CD8-positive, alpha-beta T cell (primary cell): ENCODE measurements at regions of chr11 and their contacts with region 1.

Region 1: GRCh38 chr11:11798586-11799438 is 43.0 kb upstream of the USP47 start:
- DNase-seq: peak; percentile 44 to 90 (median 77)
- ATAC-seq: peak; percentile 93
- H3K4me3 ChIP-seq: no peak overlapping the region
- H3K4me3 Mint-ChIP-seq: no peak overlapping the region
- H3K27ac ChIP-seq: no peak overlapping the region
- H3K27ac Mint-ChIP-seq: no peak overlapping the region
- H3K4me1 ChIP-seq: no peaks in the 10 kb centered on the region
- H3K4me1 Mint-ChIP-seq: no peaks in the 10 kb centered on the region
- H3K27me3 ChIP-seq: no peaks in the 10 kb centered on the region
- H3K27me3 Mint-ChIP-seq: peaks cover 28% of the 10 kb centered on the region
- CTCF ChIP-seq: peak; percentile 96

Region 2: GRCh38 chr11:11587122-11587521 is 211.7 kb before region 1 on chr11:
- CTCF ChIA-PET with region 1: no interaction called
- POLR2A ChIA-PET with region 1: no interaction called
- intact Hi-C with region 1: no loop called
- DNase-seq: no peak
- ATAC-seq: no peak
- H3K4me3 ChIP-seq: no peak overlapping the region
- H3K4me3 Mint-ChIP-seq: no peak overlapping the region
- H3K27ac ChIP-seq: no peak overlapping the region
- H3K27ac Mint-ChIP-seq: no peak overlapping the region
- H3K4me1 ChIP-seq: no peaks in the 10 kb centered on the region
- H3K4me1 Mint-ChIP-seq: no peaks in the 10 kb centered on the region
- H3K27me3 ChIP-seq: no peaks in the 10 kb centered on the region
- H3K27me3 Mint-ChIP-seq: peaks cover 3% of the 10 kb centered on the region
- CTCF ChIP-seq: no peak

Region 3: GRCh38 chr11:11675671-11676181 is 123.1 kb before region 1 on chr11:
- CTCF ChIA-PET with region 1: no interaction called
- POLR2A ChIA-PET with region 1: no interaction called
- intact Hi-C with region 1: no loop called
- DNase-seq: no peak
- ATAC-seq: no peak
- H3K4me3 ChIP-seq: no peak overlapping the region
- H3K4me3 Mint-ChIP-seq: no peak overlapping the region
- H3K27ac ChIP-seq: no peak overlapping the region
- H3K27ac Mint-ChIP-seq: no peak overlapping the region
- H3K4me1 ChIP-seq: no peaks in the 10 kb centered on the region
- H3K4me1 Mint-ChIP-seq: no peaks in the 10 kb centered on the region
- H3K27me3 ChIP-seq: no peaks in the 10 kb centered on the region
- H3K27me3 Mint-ChIP-seq: peaks cover 22% of the 10 kb centered on the region
- CTCF ChIP-seq: no peak

Region 4: DNA sequence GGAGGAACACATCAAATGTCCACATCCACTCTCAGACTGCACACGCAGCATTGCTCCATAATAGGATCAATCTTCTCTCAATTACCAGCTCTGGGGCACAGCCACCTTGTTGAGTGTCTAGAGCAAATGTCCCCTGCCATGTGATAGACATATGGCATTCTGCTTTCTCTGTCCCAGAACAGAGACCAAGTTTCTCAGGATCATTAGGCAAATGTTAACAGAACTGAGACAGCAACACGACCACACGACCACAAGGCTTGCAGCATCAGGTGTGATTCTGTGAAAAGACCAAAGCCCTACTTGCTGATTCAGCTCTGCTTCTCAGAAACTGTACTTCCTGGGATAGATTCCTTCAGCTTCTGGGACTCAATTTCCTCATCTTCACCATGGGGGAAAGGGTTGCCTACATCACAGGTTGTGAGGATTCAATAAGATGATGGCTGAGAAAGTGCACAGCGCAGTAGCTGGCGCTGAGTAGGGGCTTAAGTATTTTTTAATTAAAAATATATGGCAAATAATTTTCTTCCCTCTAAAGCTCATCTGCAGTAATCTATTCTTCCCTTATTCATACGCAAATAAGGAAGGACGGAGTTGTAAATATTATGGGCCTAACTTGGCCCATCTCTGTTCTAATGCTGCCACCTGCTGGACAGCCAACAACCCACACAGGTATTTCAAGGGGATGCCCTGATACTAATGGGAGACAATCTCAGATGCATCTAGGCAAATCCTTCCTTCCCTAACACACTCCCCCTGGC is 11.3 kb before region 1 on chr11:
- CTCF ChIA-PET with region 1: interaction called, 29 read pairs
- POLR2A ChIA-PET with region 1: no interaction called
- intact Hi-C with region 1: no loop called
- DNase-seq: peak; percentile 33 to 79 (median 71)
- ATAC-seq: peak; percentile 82
- H3K4me3 ChIP-seq: no peak overlapping the region
- H3K4me3 Mint-ChIP-seq: no peak overlapping the region
- H3K27ac ChIP-seq: no peak overlapping the region
- H3K27ac Mint-ChIP-seq: no peak overlapping the region
- H3K4me1 ChIP-seq: no peaks in the 10 kb centered on the region
- H3K4me1 Mint-ChIP-seq: no peaks in the 10 kb centered on the region
- H3K27me3 ChIP-seq: no peaks in the 10 kb centered on the region
- H3K27me3 Mint-ChIP-seq: peaks cover 7% of the 10 kb centered on the region
- CTCF ChIP-seq: peak; percentile 83

Region 5: DNA sequence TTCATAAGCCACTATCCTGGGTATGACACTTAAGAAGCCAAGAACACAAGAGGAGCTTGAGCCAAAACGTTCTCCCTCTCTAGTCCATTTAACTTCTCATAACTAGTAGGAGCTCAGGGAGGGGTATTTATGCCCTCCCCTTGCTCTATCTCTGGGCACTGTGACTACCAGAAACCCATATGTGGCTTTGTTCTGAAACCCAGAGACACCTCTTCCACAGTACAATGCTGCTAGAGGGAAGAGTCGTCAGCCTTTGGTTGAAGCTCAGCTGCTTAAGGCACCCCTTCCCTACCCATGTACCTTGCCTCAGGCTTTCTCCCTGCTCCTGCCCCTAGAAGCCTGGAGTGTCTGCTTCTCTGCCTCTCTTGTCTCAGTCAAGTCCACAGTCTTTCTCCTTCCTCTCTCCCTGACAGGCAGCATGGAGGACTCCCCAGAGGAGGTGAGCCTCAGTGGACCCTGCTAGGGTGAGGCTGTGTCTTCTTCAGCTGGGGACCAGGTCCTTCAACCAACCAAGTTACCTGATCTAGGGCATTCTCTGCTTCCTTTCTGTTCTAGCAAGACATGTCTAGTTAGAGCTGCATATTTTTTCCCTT is 19.8 kb after region 1 on chr11:
- CTCF ChIA-PET with region 1: interaction called, 15 read pairs
- POLR2A ChIA-PET with region 1: no interaction called
- intact Hi-C with region 1: no loop called
- DNase-seq: no peak
- ATAC-seq: no peak
- H3K4me3 ChIP-seq: no peak overlapping the region
- H3K4me3 Mint-ChIP-seq: no peak overlapping the region
- H3K27ac ChIP-seq: no peak overlapping the region
- H3K27ac Mint-ChIP-seq: no peak overlapping the region
- H3K4me1 ChIP-seq: no peaks in the 10 kb centered on the region
- H3K4me1 Mint-ChIP-seq: no peaks in the 10 kb centered on the region
- H3K27me3 ChIP-seq: peaks cover 0 to 2% of the 10 kb centered on the region in 2 experiments
- H3K27me3 Mint-ChIP-seq: peaks cover 4% of the 10 kb centered on the region
- CTCF ChIP-seq: no peak

Region 6: DNA sequence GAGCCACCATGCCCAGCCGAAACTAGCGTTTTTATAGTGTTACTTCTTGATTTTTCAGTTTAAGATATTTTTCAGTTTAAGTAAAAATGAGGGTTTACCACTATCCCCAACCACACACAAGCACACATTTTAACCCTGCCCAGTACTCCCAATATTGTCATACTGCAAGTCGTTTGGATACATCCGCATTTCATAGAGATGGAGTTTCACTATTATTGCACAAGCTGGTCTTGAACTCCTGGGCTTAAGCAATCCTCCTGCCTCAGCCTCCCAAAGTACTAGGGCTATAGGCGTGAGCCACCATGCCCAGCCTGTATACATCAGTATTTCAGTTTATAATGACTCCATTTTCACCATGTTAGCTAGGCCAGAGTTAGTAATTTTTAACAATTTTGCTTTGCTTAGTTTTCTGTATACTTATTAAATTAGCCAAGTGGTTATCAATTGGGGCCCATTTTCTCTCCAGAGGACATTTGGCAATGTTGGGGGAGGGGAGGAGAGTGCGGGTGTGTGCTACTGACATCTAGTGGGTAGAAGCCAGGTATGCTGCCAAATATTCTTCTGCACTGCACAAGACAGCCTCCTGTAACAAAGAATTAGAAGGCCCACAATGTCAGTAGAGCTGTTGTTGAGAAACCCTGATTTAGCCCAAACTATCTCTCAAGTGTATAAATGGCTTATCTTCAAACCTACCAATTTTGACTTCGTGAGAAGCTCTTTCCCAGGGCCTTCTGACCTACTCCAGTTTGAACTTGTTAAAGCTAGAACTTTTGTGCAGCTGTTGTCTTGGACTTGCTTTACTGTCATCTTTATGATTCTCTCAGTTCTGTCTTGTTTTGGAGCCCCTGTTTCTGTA is 50.3 kb after region 1 on chr11:
- CTCF ChIA-PET with region 1: interaction called, 42 read pairs
- POLR2A ChIA-PET with region 1: no interaction called
- intact Hi-C with region 1: loop called (anchors 2 kb)
- DNase-seq: peak; percentile 19 to 86 (median 63)
- ATAC-seq: peak; percentile 94
- H3K4me3 ChIP-seq: no peak overlapping the region
- H3K4me3 Mint-ChIP-seq: peak overlapping the region; percentile 47
- H3K27ac ChIP-seq: no peak overlapping the region
- H3K27ac Mint-ChIP-seq: peak overlapping the region; percentile 69
- H3K4me1 ChIP-seq: peaks cover 83% of the 10 kb centered on the region
- H3K4me1 Mint-ChIP-seq: peaks cover 86% of the 10 kb centered on the region
- H3K27me3 ChIP-seq: no peaks in the 10 kb centered on the region
- H3K27me3 Mint-ChIP-seq: no peaks in the 10 kb centered on the region
- CTCF ChIP-seq: peak; percentile 75

Region 7: DNA sequence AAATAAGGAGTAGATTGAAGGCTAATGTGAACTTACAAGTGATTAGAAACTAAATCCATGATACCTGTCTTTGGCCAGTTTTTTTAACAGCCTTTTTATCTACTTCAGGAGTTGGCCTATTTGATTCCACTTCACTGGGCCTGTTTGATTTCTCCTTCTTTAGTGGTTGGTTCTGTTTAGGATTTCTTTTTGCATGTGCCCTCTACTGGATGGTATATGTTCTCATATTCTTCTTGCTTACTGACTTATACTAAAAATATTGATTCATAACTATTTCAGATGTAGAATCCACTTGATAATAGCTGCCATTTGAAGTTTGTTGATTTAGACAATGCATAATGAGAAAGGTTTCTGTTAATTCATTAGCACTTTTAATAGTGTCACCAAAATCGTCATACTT is 96.9 kb after region 1 on chr11:
- CTCF ChIA-PET with region 1: interaction called, 9 read pairs
- POLR2A ChIA-PET with region 1: no interaction called
- intact Hi-C with region 1: loop called (anchors 5 kb)
- DNase-seq: peak in 1 of 9 experiments; percentile 21
- ATAC-seq: no peak
- H3K4me3 ChIP-seq: no peak overlapping the region
- H3K4me3 Mint-ChIP-seq: no peak overlapping the region
- H3K27ac ChIP-seq: no peak overlapping the region
- H3K27ac Mint-ChIP-seq: no peak overlapping the region
- H3K4me1 ChIP-seq: no peaks in the 10 kb centered on the region
- H3K4me1 Mint-ChIP-seq: peaks cover 6% of the 10 kb centered on the region
- H3K27me3 ChIP-seq: no peaks in the 10 kb centered on the region
- H3K27me3 Mint-ChIP-seq: no peaks in the 10 kb centered on the region
- CTCF ChIP-seq: no peak

Region 8: DNA sequence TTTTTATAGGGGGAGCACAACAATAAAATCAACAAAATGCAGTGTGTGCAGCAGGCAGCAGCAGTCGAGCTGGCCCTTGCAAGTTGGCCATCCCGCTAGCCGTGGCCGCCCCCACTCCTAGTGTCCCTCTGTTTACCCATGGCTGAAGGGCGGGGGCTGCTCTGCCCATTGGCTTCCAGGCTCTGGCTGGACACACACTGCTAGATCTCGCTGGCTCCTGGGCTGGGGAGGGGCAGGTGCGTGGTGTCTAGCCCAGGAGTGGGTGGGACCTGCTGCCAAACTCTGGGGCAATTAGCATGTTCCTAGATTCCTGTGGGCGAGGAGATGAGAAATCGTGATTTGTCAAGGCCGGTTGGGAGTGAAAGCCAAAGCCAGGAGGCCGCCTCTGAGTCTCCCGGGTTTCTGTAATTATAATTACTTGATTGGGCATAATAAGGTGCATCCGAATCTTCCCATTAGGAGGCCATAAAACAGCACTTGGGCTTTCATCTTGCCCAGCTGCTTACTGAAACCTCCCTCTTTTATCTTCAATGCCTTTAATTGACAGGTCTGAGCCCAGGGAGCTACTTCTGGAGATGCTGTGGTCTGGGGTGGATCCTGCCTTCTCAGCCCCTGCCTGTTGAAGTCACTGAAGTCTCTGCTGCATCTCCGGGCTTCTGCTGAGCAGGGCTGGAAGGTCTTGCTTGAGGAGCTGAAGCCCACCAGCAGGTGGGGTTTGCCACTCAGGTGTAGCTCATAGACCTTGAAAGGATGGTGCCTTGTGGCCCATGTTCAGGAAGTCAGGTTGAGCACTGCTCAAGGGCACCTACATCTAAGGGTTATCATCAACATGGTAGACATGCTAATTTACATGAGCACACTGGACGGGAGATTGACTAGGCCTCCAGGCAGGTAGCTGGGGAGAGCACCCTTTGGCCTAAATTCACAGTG is 254.1 kb after region 1 on chr11:
- CTCF ChIA-PET with region 1: interaction called, 19 read pairs
- POLR2A ChIA-PET with region 1: no interaction called
- intact Hi-C with region 1: no loop called
- DNase-seq: peak in 4 of 9 experiments; percentile 28 to 48 (median 38)
- ATAC-seq: no peak
- H3K4me3 ChIP-seq: no peak overlapping the region
- H3K4me3 Mint-ChIP-seq: no peak overlapping the region
- H3K27ac ChIP-seq: no peak overlapping the region
- H3K27ac Mint-ChIP-seq: no peak overlapping the region
- H3K4me1 ChIP-seq: no peaks in the 10 kb centered on the region
- H3K4me1 Mint-ChIP-seq: no peaks in the 10 kb centered on the region
- H3K27me3 ChIP-seq: no peaks in the 10 kb centered on the region
- H3K27me3 Mint-ChIP-seq: no peaks in the 10 kb centered on the region
- CTCF ChIP-seq: no peak